CD4-positive, alpha-beta T cell (primary cell): ENCODE measurements at regions of chr6 and their contacts with region 1.

Region 1: DNA sequence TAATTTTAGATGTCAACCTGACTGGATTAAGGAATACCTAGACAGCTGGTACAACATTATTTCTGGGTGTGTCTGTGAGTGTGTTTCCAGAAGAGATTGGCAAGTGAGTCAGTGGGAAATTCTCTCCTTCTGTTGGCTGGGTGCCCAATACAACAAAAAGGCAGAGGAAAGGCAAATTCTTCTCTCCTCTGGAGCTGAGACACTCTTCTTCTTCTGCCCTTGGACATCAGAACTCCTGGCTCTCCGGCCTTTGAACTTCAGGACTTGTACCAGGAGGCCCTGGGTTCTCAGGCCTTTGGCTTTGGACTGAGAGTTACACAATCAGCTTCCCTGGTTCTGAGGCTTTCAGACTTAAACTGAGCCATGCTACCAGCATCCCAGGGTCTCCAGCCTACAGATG is 7.8 kb upstream of the BTN3A1 start:
- DNase-seq: no peak
- ATAC-seq: no peak
- H3K4me3 ChIP-seq: no peak overlapping the region
- H3K4me3 Mint-ChIP-seq: no peak overlapping the region
- H3K27ac ChIP-seq: no peak overlapping the region
- H3K27ac Mint-ChIP-seq: no peak overlapping the region
- H3K4me1 ChIP-seq: no peaks in the 10 kb centered on the region
- H3K4me1 Mint-ChIP-seq: no peaks in the 10 kb centered on the region
- H3K27me3 ChIP-seq: no peaks in the 10 kb centered on the region
- H3K27me3 Mint-ChIP-seq: no peaks in the 10 kb centered on the region
- CTCF ChIP-seq: no peak

Region 2: DNA sequence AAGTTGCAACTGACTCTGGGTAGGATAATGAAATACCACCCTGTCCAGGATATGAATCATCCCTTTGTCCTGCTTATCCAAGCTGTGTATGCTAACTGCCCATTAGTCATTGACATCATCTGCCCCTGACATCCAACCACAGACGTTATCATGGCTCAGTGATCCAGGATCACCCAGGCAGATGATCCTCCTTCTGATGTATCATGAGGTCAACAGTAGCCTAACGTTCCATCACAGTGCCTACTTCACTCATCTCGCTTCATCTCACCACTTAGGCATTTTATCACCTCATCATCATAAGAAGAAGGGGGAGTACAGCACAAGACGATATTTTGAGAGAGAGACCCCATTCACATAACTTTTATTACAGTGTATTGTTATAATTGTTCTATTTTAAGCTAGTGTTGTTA is 42.7 kb before region 1 on chr6:
- CTCF ChIA-PET with region 1: no interaction called
- POLR2A ChIA-PET with region 1: no interaction called
- intact Hi-C with region 1: loop called in 1 of 2 experiments (anchors 5 kb)
- DNase-seq: no peak
- ATAC-seq: no peak
- H3K4me3 ChIP-seq: no peak overlapping the region
- H3K4me3 Mint-ChIP-seq: no peak overlapping the region
- H3K27ac ChIP-seq: no peak overlapping the region
- H3K27ac Mint-ChIP-seq: no peak overlapping the region
- H3K4me1 ChIP-seq: no peaks in the 10 kb centered on the region
- H3K4me1 Mint-ChIP-seq: no peaks in the 10 kb centered on the region
- H3K27me3 ChIP-seq: no peaks in the 10 kb centered on the region
- H3K27me3 Mint-ChIP-seq: no peaks in the 10 kb centered on the region
- CTCF ChIP-seq: no peak